Dendritic cell treated with granulocyte-macrophage colony-stimulating factor and Interleukin-4, amounts not matched to agents 40 ng/mL and 50 ng/mL, for 4 days (primary cell): ENCODE measurements at regions of chr18 and their contacts with region 1.

Region 1: GRCh38 chr18:72075040-72075439 is 469.1 kb downstream of the CBLN2 start:
- H3K4me3 Mint-ChIP-seq: no peak overlapping the region
- H3K27ac Mint-ChIP-seq: no peak overlapping the region
- H3K4me1 Mint-ChIP-seq: no peaks in the 10 kb centered on the region
- H3K27me3 Mint-ChIP-seq: no peaks in the 10 kb centered on the region

Region 2: DNA sequence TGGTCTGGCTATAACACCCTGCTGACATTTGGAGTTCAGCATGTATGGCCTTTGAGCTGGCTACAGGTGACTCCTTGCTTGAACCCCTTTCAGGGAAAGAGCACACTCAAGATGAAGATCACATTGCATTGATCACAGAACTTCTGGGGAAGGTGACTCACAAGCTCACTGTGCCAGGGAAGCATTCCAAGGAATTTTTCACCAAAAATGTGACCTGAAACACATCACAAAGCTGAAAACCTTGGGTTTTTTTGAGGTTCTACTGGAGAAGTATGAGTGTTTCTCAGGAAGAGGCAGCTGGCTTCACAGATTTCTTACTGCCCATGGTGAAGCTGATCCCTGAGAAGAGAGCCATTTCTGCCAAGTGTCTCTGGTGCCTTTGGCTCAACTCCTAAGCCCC is 409.9 kb before region 1 on chr18:
- intact Hi-C with region 1: loop called (anchors 10 kb)
- H3K4me3 Mint-ChIP-seq: no peak overlapping the region
- H3K27ac Mint-ChIP-seq: no peak overlapping the region
- H3K4me1 Mint-ChIP-seq: no peaks in the 10 kb centered on the region
- H3K27me3 Mint-ChIP-seq: no peaks in the 10 kb centered on the region

Region 3: GRCh38 chr18:72086421-72086820 is 11.4 kb after region 1 on chr18:
- intact Hi-C with region 1: no loop called
- H3K4me3 Mint-ChIP-seq: no peak overlapping the region
- H3K27ac Mint-ChIP-seq: no peak overlapping the region
- H3K4me1 Mint-ChIP-seq: no peaks in the 10 kb centered on the region
- H3K27me3 Mint-ChIP-seq: no peaks in the 10 kb centered on the region

Region 4: GRCh38 chr18:72128649-72129048 is 53.6 kb after region 1 on chr18:
- intact Hi-C with region 1: no loop called
- H3K4me3 Mint-ChIP-seq: no peak overlapping the region
- H3K27ac Mint-ChIP-seq: no peak overlapping the region
- H3K4me1 Mint-ChIP-seq: no peaks in the 10 kb centered on the region
- H3K27me3 Mint-ChIP-seq: no peaks in the 10 kb centered on the region